ENCODE measurements at regions of chr2 and their contacts with region 1.

Region 1: GRCh38 chr2:100394111-100394641 is 23.3 kb downstream of the CHST10 start:
- DNase-seq: peak; percentile 63
- ATAC-seq: peak; percentile 77
- H3K4me3 Mint-ChIP-seq: peak overlapping the region; percentile 80
- H3K27ac Mint-ChIP-seq: peak overlapping the region; percentile 97
- H3K4me1 Mint-ChIP-seq: peaks cover 43% of the 10 kb centered on the region
- H3K27me3 Mint-ChIP-seq: no peaks in the 10 kb centered on the region
- CTCF ChIP-seq: no peak

Region 2: DNA sequence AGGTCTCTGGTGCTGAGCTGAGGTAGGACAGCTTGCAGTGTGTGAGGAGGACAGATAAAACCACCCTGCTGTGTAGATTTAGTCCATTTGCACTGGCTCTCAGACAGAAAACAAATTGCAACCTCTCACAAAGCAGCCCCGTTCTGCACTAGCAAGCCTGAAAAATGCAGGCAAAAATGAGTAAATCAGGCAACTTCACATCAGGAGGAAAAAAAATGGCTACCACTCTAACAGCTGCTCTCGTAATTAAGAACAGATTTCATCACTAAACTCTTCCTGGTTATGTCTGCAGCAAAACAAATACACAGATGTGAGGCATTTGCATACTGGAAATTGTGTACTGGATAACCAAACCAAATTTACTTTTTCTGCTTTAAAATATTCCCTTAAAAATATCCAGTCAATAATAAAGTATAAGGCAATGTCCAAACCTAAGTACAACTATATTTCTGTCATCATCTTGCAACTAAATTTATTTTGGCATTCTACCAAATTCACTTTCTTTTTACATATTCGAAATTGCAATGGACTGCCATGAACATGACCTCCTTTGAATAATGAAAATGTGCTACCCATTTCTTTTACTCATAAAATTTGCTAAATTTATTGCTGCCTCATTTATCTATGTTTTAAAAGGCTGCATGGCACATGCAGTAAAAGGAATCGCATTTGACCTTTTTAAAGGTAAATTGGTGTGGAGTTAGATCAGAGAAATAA is 409.2 kb before region 1 on chr2:
- CTCF ChIA-PET with region 1: no interaction called
- POLR2A ChIA-PET with region 1: no interaction called
- intact Hi-C with region 1: no loop called
- DNase-seq: no peak
- ATAC-seq: no peak
- H3K4me3 Mint-ChIP-seq: no peak overlapping the region
- H3K27ac Mint-ChIP-seq: no peak overlapping the region
- H3K4me1 Mint-ChIP-seq: peaks cover 7% of the 10 kb centered on the region
- H3K27me3 Mint-ChIP-seq: no peaks in the 10 kb centered on the region
- CTCF ChIP-seq: no peak

Region 3: GRCh38 chr2:100113990-100114433 is 280.2 kb before region 1 on chr2:
- CTCF ChIA-PET with region 1: no interaction called
- POLR2A ChIA-PET with region 1: no interaction called
- intact Hi-C with region 1: loop called (anchors 10 kb)
- DNase-seq: peak; percentile 26
- ATAC-seq: peak; percentile 72
- H3K4me3 Mint-ChIP-seq: peak overlapping the region; percentile 71
- H3K27ac Mint-ChIP-seq: peak overlapping the region; percentile 88
- H3K4me1 Mint-ChIP-seq: peaks cover 82% of the 10 kb centered on the region
- H3K27me3 Mint-ChIP-seq: no peaks in the 10 kb centered on the region
- CTCF ChIP-seq: no peak

Region 4: DNA sequence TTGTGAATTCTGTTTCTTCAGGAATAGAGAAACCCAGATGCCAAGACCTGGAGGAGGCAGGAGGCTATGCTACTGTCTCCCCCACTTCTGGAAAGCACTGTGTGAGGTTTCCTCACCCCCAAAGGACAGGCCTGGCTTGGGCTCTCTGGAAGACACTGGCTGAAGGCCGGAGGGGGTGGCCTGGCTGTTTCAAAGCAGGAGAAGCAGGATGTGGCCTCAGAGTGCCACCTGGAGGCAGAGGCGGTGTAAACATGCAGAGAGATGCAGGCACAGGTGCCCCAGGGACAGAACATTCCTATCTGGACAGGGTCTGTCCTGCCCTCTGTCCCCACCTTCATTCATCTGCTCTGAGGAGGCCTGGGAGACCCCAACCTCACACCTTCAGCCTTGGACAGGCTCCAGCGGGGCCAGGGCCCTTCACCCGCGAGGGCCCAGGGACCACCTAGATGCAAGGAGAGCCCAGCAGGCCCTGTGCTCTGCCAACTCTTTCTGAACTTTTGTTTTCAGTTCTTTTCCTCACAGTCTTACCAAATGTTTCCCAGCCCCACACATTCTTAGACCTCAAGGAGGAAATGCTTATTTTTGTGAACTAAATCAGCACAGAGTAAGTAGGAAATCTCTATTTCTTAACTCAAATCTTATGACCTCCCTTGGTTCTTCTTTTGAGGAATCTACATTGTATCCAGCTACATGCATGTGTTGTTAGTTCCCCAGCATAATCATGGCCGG is 151.1 kb before region 1 on chr2:
- CTCF ChIA-PET with region 1: no interaction called
- POLR2A ChIA-PET with region 1: interaction called, 24 read pairs
- intact Hi-C with region 1: loop called (anchors 1 kb)
- DNase-seq: peak; percentile 67
- ATAC-seq: peak; percentile 41
- H3K4me3 Mint-ChIP-seq: peak overlapping the region; percentile 11
- H3K27ac Mint-ChIP-seq: peak overlapping the region; percentile 62
- H3K4me1 Mint-ChIP-seq: peaks cover 77% of the 10 kb centered on the region
- H3K27me3 Mint-ChIP-seq: peaks cover 11% of the 10 kb centered on the region
- CTCF ChIP-seq: peak; percentile 84

Region 5: DNA sequence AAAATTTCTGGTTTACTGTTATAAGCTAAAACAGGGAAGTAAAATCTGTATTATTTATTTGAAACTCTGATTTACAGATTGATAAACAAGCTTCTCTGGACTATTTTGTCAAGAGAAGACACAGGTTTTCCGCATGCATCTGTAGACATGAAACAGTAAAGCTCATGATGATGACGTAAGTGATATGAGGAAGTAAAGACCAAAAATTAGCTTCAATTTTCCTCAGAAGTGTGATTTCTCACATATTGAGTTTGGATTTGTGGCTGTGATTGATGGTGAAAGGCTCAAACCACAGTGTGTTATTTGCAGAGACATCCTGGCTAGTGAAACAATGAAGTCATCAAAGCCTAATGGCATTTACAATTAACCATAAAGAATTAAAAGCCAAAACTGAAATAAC is 59.2 kb before region 1 on chr2:
- CTCF ChIA-PET with region 1: no interaction called
- POLR2A ChIA-PET with region 1: no interaction called
- intact Hi-C with region 1: no loop called
- DNase-seq: no peak
- ATAC-seq: no peak
- H3K4me3 Mint-ChIP-seq: no peak overlapping the region
- H3K27ac Mint-ChIP-seq: no peak overlapping the region
- H3K4me1 Mint-ChIP-seq: no peaks in the 10 kb centered on the region
- H3K27me3 Mint-ChIP-seq: peaks cover 27% of the 10 kb centered on the region
- CTCF ChIP-seq: no peak

Region 6: GRCh38 chr2:100381240-100381639 is 12.9 kb before region 1 on chr2:
- CTCF ChIA-PET with region 1: interaction called, 17 read pairs
- POLR2A ChIA-PET with region 1: interaction called, 7 read pairs
- intact Hi-C with region 1: loop called (anchors 1 kb)
- DNase-seq: peak; percentile 71
- ATAC-seq: peak; percentile 97
- H3K4me3 Mint-ChIP-seq: no peak overlapping the region
- H3K27ac Mint-ChIP-seq: peak overlapping the region; percentile 31
- H3K4me1 Mint-ChIP-seq: peaks cover 8% of the 10 kb centered on the region
- H3K27me3 Mint-ChIP-seq: no peaks in the 10 kb centered on the region
- CTCF ChIP-seq: no peak

Region 7: GRCh38 chr2:100562732-100563720 is 168.8 kb after region 1 on chr2 and contains the start of gene PDCL3:
- CTCF ChIA-PET with region 1: no interaction called
- POLR2A ChIA-PET with region 1: interaction called, 22 read pairs
- intact Hi-C with region 1: loop called (anchors 1 kb)
- DNase-seq: peak; percentile 98
- ATAC-seq: peak; percentile 89
- H3K4me3 Mint-ChIP-seq: peak within 1 kb of the TSS; percentile 90
- H3K27ac Mint-ChIP-seq: peak within 1 kb of the TSS; percentile 98
- H3K4me1 Mint-ChIP-seq: peaks cover 21% of the 10 kb centered on the region
- H3K27me3 Mint-ChIP-seq: no peaks in the 10 kb centered on the region
- CTCF ChIP-seq: no peak
- total RNA-seq, gene PDCL3: 26.1 and 27.8 TPM in 2 replicates

Region 8: GRCh38 chr2:101308432-101309210 is 914.4 kb after region 1 on chr2 and contains the start of gene RNF149:
- CTCF ChIA-PET with region 1: no interaction called
- POLR2A ChIA-PET with region 1: no interaction called
- intact Hi-C with region 1: loop called (anchors 10 kb)
- DNase-seq: peak; percentile 97
- ATAC-seq: peak; percentile 79
- H3K4me3 Mint-ChIP-seq: peak within 1 kb of the TSS; percentile 85
- H3K27ac Mint-ChIP-seq: peak within 1 kb of the TSS; percentile 90
- H3K4me1 Mint-ChIP-seq: peaks cover 54% of the 10 kb centered on the region
- H3K27me3 Mint-ChIP-seq: no peaks in the 10 kb centered on the region
- CTCF ChIP-seq: no peak
- total RNA-seq, gene RNF149: 39.6 and 48.3 TPM in 2 replicates

Region 9: DNA sequence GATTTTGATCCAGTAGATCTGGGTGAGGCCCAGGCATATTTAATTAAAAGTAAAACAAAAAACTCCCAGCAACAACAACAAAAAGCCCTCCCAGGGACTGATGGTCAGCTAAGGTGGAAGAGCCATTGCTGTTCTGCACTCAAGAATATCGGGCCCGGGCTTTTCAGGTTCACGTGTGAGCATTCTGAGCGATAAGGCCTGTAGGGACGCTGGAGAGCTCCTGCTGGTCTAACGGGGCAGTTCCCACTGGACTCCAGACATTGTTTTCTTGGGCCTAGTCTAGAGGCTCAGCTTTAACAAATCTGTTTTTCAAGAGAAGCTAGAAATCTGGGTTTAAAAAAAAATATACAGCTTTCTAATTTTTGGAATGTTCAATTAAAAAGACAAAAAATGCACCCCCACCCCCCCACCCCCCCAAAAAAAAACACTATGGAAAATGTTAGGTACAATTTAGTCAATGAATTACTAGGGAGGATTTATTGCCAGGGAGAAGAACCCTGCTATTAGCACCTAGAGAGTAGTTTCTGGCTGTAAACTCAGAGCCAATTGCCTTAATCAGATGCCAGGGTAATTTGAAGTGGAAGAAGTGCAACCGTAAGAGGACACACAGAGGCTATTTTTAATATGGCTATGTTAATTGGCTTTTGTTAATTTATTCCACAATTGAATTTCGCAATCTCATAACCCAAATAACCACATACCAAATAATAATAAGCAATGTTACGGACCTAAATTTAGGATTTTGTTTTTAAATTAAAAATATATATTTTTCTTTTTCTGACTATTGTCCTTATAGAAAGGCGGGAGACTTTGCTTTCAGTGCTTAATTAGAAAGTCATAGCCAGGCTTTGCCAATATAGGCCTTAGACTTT is 1382.2 kb after region 1 on chr2:
- CTCF ChIA-PET with region 1: no interaction called
- POLR2A ChIA-PET with region 1: no interaction called
- intact Hi-C with region 1: no loop called
- DNase-seq: no peak
- ATAC-seq: no peak
- H3K4me3 Mint-ChIP-seq: no peak overlapping the region
- H3K27ac Mint-ChIP-seq: no peak overlapping the region
- H3K4me1 Mint-ChIP-seq: peaks cover 94% of the 10 kb centered on the region
- H3K27me3 Mint-ChIP-seq: no peaks in the 10 kb centered on the region
- CTCF ChIP-seq: no peak

Measured in activated B cell treated with CpG ODN at 0.5 μM for 24 hours (primary cell).